ENCODE measurements at regions of chr17 and their contacts with region 1.

Region 1: GRCh38 chr17:40532520-40533204 is 31.2 kb upstream of the TNS4 start:
- DNase-seq: no peak
- H3K27ac ChIP-seq: peak overlapping the region; percentile 71
- CTCF ChIP-seq: no peak

Region 2: DNA sequence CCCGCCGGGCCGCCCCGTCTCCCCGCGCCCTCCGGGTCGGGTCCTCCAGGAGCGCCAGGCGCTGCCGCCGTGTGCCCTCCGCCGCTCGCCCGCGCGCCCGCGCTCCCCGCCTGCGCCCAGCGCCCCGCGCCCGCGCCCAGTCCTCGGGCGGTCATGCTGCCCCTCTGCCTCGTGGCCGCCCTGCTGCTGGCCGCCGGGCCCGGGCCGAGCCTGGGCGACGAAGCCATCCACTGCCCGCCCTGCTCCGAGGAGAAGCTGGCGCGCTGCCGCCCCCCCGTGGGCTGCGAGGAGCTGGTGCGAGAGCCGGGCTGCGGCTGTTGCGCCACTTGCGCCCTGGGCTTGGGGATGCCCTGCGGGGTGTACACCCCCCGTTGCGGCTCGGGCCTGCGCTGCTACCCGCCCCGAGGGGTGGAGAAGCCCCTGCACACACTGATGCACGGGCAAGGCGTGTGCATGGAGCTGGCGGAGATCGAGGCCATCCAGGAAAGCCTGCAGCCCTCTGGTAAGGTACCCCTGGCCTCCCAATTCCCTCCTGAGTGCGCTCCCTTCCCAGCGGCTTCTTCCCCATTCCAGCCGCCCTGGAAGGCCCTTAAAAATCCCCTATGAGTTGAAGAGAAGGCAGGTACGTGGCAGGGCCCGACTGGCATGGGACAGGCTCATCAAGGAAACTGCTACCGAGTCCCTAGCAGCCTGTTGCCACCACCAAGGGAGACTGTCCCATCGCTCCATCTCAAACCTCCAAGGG is 88.9 kb before region 1 on chr17:
- CTCF ChIA-PET with region 1: interaction called, 10 read pairs
- POLR2A ChIA-PET with region 1: interaction called, 6 read pairs
- DNase-seq: peak; percentile 63
- H3K27ac ChIP-seq: peak overlapping the region; percentile 77
- CTCF ChIP-seq: peak; percentile 80

Region 3: DNA sequence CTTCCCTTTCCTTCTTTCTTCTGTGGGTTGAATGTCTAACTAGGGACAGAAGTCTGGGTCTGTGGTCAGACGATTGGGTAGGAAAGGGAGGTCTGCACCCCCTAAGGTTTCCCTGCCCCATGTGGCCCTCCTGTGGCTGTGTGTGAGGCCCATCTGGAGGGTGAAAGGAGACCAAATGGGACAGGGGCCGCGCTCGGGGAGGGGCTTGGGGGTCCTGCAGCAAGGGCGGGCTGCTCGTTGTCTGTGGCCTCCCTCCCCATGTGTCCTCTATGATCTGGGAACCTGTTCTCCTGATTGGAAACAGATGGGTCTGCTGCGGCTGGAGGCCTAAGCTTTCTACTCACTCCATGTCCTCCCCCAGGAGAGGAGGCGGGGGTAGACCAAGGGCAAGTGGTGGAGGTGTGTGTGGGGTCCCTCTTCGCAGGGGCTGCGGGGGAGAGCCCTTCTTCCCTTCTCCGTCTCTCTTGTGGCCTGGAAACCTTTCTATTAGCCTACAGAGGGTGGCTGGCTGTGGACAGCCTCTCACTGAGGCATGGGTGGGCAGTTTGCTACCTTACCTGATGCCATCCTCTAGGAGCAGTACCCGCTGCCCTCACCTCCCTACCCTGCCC is 70.8 kb before region 1 on chr17:
- CTCF ChIA-PET with region 1: no interaction called
- POLR2A ChIA-PET with region 1: no interaction called
- DNase-seq: no peak
- H3K27ac ChIP-seq: no peak overlapping the region
- CTCF ChIP-seq: no peak

Region 4: GRCh38 chr17:40474419-40475002 is 58.2 kb before region 1 on chr17:
- CTCF ChIA-PET with region 1: interaction called, 10 read pairs
- POLR2A ChIA-PET with region 1: interaction called, 6 read pairs
- DNase-seq: no peak
- H3K27ac ChIP-seq: peak overlapping the region; percentile 100
- CTCF ChIP-seq: no peak

Region 5: GRCh38 chr17:40499551-40500174 is 33.0 kb before region 1 on chr17:
- CTCF ChIA-PET with region 1: interaction called, 24 read pairs
- POLR2A ChIA-PET with region 1: interaction called, 7 read pairs
- DNase-seq: no peak
- H3K27ac ChIP-seq: peak overlapping the region; percentile 100
- CTCF ChIP-seq: no peak

Region 6: GRCh38 chr17:40548982-40549685 is 16.5 kb after region 1 on chr17:
- CTCF ChIA-PET with region 1: interaction called, 11 read pairs
- POLR2A ChIA-PET with region 1: interaction called, 5 read pairs
- DNase-seq: no peak
- H3K27ac ChIP-seq: peak overlapping the region; percentile 94
- CTCF ChIP-seq: no peak

Region 7: GRCh38 chr17:40559954-40560591 is 27.4 kb after region 1 on chr17:
- CTCF ChIA-PET with region 1: interaction called, 26 read pairs
- POLR2A ChIA-PET with region 1: no interaction called
- DNase-seq: peak; percentile 98
- H3K27ac ChIP-seq: peak overlapping the region; percentile 88
- CTCF ChIP-seq: peak; percentile 95

Measured in RWPE1 (cell line).